Mammary epithelial cell (primary cell): ENCODE measurements at regions of chr7 and their contacts with region 1.

Region 1: GRCh38 chr7:139340037-139340807 is 915 bp upstream of the FMC1 start:
- DNase-seq: peak; percentile 99
- H3K4me3 ChIP-seq: peak overlapping the region; percentile 73 to 90 (median 87)
- H3K27ac ChIP-seq: peak overlapping the region; percentile 99
- H3K4me1 ChIP-seq: peaks cover 7% of the 10 kb centered on the region
- H3K27me3 ChIP-seq: no peaks in the 10 kb centered on the region
- CTCF ChIP-seq: peak; percentile 59 to 74

Region 2: DNA sequence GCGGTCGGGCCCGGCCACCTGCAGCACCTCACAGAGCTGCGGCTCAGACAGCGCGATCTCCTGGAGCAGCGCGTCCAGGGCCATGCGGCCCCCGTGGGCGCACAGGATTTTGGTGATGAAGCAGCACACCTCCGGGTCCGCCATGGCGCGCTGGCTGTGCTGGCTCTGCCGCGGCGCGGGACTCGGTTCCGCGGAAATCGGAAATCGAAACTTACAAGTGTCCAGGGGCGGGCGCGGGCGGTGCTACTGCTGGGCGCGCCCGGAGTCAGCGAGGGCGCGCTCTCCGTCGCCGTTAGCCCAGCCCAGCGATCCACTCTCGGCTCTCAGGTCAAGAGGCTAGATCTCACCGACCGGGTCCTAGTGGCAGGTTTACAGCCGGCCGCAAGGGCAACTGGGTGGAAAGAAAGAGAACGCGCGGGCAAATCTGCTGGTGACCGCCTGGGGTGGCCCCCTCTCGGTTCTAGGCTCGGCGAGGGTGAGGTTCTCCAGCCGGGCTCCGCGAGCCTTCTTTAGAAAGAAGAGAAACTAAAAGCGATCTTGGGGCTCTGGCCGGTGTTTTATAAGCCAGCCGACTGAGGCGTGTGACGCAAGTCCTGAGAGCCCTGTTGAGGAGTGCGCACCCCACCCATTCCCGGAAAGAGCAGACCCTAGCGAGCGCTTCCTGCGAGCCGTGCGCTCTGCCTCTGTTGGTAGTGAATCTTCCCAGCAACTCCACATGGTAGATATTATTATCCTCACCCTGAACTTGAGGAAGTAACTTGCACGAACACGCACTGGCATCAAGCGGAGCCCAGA is 230.8 kb before region 1 on chr7 and contains the start of gene ZC3HAV1:
- CTCF ChIA-PET with region 1: no interaction called
- dilution Hi-C with region 1: no loop called
- in situ Hi-C with region 1: no loop called
- intact Hi-C with region 1: loop called (anchors 1 kb)
- DNase-seq: peak; percentile 86
- H3K4me3 ChIP-seq: peak within 1 kb of the TSS; percentile 75 to 92 (median 80)
- H3K27ac ChIP-seq: peak within 1 kb of the TSS; percentile 87
- H3K4me1 ChIP-seq: peaks cover 22% of the 10 kb centered on the region
- H3K27me3 ChIP-seq: no peaks in the 10 kb centered on the region
- CTCF ChIP-seq: no peak
- total RNA-seq, gene ZC3HAV1: 23.6 to 50.5 TPM

Region 3: GRCh38 chr7:139359366-139360209 is 19.4 kb after region 1 on chr7 and contains the start of gene LUC7L2:
- CTCF ChIA-PET with region 1: interaction called, 3 read pairs
- dilution Hi-C with region 1: no loop called
- in situ Hi-C with region 1: no loop called
- intact Hi-C with region 1: loop called (anchors 1 kb)
- DNase-seq: peak; percentile 98
- H3K4me3 ChIP-seq: peak within 1 kb of the TSS; percentile 93 to 100 (median 99)
- H3K27ac ChIP-seq: peak within 1 kb of the TSS; percentile 92
- H3K4me1 ChIP-seq: peaks cover 16% of the 10 kb centered on the region
- H3K27me3 ChIP-seq: no peaks in the 10 kb centered on the region
- CTCF ChIP-seq: peak in 1 of 2 donors; percentile 1
- total RNA-seq, gene LUC7L2: 44.0 to 110 TPM